Activated CD4-positive, alpha-beta T cell treated with anti-CD3 and anti-CD28 coated beads, Interleukin-2, amount 10 ng/mL, durations not matched to agents 24 days and 14 days (primary cell): ENCODE measurements at regions of chr19 and their contacts with region 1.

Region 1: GRCh38 chr19:17405250-17406038 is at the start of gene BST2:
- DNase-seq: peak; percentile 88
- H3K4me3 Mint-ChIP-seq: peak within 1 kb of the TSS; percentile 97
- H3K27ac Mint-ChIP-seq: peak within 1 kb of the TSS; percentile 91
- H3K4me1 Mint-ChIP-seq: peaks cover 33% of the 10 kb centered on the region
- H3K27me3 Mint-ChIP-seq: no peaks in the 10 kb centered on the region
- total RNA-seq, gene BST2: 151 and 153 TPM in 2 replicates

Region 2: DNA sequence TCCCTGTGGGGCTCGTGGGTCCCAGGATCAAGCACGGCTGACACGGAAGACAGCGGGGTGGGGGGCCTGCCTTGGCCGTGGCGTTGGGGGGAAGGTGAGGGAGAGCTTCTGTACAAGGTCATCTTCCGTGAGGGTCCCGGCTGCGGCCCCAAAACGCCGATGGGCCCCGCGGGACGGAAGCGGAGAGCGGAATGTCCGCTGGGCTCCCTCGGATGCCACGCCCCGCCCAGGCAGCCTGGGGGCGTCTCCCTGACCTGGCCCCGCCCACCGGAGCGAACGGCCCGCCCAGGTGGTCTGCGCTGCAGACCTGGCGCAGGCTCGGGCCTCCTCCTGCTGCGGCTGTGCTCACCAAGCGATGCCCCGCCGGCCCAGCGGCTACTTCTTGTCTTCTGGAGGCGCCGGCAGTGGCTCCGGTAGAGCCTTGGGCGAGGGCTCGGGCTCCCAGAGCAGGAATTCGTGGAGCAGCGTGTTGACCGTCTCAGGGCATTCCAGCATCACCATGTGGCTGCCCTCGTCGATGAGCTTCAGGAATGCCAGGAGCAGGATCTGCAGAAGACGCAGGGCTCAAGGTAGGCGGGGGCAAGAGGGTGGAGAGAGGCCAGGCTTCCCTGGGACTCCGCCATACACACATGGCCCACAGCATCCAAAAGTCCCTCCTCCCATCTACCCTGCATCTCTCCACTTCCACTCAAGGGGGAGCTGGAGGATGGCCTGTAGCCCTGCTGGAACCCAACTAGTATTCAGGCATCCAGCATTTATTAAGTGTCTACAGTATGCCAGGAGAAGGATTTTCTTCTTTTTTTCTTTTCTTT is 113.0 kb before region 1 on chr19:
- intact Hi-C with region 1: loop called (anchors 1 kb)
- DNase-seq: peak; percentile 95
- H3K4me3 Mint-ChIP-seq: peak overlapping the region; percentile 92
- H3K27ac Mint-ChIP-seq: peak overlapping the region; percentile 89
- H3K4me1 Mint-ChIP-seq: peaks cover 3% of the 10 kb centered on the region
- H3K27me3 Mint-ChIP-seq: peaks cover 7% of the 10 kb centered on the region

Region 3: DNA sequence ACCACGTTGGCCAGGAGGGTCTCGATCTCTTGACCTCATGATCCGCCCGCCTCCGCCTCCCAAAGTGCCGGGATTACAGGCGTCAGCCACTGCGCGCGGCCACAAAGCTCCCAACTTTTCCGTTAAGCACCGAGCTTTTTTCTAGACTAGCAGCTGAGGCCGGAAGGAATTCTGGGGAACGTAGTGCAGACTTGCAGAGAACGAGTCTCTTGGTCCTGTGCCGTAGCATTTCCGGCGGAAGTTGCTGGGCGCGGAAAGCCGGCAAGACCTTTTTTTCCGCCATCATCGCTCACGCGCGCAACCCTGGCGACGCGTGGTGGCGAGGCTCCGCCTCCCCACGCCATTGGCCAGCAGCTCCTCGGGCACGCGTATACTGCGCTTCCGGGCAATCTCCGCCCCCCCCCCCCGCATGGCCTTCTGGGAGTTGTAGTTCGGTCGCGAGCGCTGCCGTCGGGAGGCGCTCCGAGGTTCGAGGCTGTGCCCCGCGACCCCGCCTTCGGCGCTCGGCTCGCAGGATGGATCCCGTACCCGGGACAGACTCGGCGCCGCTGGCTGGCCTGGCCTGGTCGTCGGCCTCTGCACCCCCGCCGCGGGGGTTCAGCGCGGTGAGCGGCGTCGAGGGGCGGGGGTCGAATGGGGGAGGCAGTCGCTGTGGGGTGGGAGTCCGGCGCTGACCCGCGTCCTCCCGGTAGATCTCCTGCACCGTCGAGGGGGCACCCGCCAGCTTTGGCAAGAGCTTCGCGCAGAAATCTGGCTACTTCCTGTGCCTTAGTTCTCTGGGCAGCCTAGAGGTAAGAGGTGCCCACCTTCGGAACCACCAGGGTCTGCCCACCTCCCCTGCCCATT is 14.4 kb after region 1 on chr19 and contains the start of gene MVB12A:
- intact Hi-C with region 1: loop called (anchors 1 kb)
- DNase-seq: peak; percentile 98
- H3K4me3 Mint-ChIP-seq: peak within 1 kb of the TSS; percentile 92
- H3K27ac Mint-ChIP-seq: peak within 1 kb of the TSS; percentile 91
- H3K4me1 Mint-ChIP-seq: peaks cover 23% of the 10 kb centered on the region
- H3K27me3 Mint-ChIP-seq: no peaks in the 10 kb centered on the region
- total RNA-seq, gene MVB12A: 40.3 and 45.8 TPM in 2 replicates

Region 4: DNA sequence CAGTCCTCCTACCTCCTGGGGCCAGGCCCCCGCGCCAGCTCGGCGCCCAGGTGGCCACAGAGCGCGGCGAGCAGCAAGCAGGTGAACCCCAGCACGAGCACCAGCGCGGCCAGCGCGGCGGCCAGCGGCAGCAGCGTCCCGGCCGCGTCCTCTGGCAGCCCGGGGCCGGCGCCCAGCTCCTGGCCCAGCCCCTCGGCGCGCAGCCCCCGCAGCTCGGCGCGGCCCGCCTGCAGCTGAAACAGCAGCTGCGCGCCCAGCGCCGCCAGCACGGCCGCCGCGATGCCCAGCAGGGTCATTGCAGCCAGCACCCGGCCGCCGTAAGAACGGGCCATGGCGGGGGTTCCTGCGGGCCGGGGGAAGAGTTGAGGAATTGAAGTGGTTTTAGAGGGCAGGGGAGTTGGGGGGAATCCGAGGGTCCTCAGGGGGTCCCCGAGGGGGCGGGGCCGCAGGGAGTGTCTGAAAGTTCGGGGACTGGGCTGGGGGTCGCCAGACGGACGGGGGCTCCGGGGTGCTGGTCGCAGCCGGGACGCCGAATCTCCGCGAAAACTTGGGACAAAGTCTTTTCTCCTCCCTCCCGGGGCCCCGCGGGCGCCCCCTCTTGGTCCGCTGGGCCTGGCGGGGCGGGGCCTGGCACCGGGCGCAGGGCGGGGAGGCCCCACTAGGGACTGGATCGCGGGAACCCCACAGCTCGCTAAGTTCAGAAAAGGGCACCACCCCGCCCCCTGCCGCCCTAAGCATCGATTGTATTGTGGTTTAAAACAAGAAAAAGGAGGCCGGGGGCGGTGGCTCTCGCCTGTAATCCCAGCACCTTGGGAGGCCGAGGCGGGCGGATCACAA is 42.9 kb after region 1 on chr19 and contains the start of gene TMEM221:
- intact Hi-C with region 1: loop called (anchors 5 kb)
- DNase-seq: peak; percentile 86
- H3K4me3 Mint-ChIP-seq: peak within 1 kb of the TSS; percentile 38
- H3K27ac Mint-ChIP-seq: no peak within 1 kb of the TSS
- H3K4me1 Mint-ChIP-seq: peaks cover 12% of the 10 kb centered on the region
- H3K27me3 Mint-ChIP-seq: peaks cover 12% of the 10 kb centered on the region
- total RNA-seq, gene TMEM221: not detected in 2 replicates

Region 5: DNA sequence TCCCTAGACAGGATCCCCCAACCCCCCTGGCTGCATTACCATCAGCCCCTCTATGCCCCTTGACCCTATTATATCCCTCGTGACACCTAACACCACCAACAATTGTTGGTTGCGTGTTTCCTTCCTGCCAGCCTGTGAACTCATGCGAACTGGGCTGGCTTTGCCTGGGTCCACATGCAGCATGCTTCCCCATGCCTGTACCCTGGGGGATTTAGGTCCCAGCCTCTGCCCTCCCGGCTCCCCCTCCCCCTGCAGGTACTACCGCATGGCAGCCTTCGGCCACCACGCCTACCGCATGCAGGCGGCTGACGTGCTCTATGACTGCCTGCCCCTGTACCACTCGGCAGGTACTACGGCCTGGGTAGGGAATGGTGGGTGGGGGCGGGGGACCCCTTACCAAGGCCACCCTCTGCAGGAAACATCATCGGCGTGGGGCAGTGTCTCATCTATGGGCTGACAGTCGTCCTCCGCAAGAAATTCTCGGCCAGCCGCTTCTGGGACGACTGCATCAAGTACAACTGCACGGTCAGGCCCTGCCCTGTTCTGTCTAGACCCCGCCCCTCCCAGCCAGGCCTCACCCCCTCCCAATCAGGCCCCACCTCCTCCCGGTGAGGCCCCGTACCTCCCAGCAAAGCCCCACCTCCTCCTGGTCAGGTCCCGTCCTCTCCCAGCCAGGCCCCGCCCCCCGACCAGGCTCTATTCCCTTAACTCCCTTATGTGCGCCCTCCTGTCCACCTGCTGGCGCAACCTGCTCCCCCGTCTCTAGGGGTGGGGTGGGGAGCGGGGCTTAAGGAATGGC is 83.3 kb after region 1 on chr19:
- intact Hi-C with region 1: no loop called
- DNase-seq: peak; percentile 83
- H3K4me3 Mint-ChIP-seq: peak overlapping the region; percentile 28
- H3K27ac Mint-ChIP-seq: no peak overlapping the region
- H3K4me1 Mint-ChIP-seq: peaks cover 15% of the 10 kb centered on the region
- H3K27me3 Mint-ChIP-seq: no peaks in the 10 kb centered on the region